MCF 10A (cell line): ENCODE measurements at regions of chr2 and their contacts with region 1.

Region 1: DNA sequence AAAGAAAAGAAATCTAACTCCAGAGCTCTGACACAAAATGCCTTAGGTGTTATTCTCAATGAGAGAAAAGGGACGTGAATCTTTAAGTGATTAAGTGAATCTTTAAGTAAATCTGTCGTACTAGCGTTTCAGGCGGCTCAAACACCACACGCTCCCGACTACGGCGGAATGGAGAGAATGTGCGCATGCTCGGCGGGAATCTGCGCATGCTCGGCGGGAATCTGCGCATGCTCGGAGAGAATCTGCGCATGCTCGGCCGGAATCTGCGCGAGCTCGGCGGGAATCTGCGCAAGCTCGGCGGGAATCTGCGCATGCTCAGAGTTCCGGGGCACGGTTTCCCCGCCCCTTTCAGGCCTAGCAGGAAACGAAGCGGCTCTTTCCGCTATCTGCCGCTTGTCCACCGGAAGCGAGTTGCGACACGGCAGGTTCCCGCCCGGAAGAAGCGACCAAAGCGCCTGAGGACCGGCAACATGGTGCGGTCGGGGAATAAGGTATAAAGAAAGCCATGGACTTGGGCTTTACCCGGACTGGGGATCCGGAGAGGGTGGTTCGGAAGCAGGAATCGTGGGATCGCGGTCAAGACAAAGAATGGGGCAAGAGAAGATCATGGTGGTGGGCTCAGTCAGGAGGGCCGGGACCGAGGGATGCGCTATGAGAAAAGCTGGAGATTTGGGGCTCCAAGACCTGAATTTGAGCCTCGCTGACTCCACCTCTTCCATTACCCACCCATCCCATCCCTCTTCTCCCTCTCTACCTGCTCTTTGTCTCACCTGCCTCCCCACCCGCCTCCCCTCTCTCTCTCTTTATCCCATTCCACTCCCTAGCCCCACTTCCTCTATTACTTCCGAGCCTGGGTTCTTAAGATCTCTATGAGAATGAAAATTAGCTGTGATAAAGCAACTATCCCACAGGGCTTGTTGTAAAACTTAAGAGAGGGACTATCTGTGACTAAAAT is at the start of gene XRCC5:
- DNase-seq: peak; percentile 95
- H3K4me3 Mint-ChIP-seq: peak within 1 kb of the TSS; percentile 100
- H3K27ac Mint-ChIP-seq: peak within 1 kb of the TSS; percentile 100
- H3K4me1 Mint-ChIP-seq: peaks cover 24% of the 10 kb centered on the region
- H3K27me3 Mint-ChIP-seq: no peaks in the 10 kb centered on the region
- CTCF ChIP-seq: no peak
- total RNA-seq, gene XRCC5: 159 and 198 TPM in 2 replicates

Region 2: DNA sequence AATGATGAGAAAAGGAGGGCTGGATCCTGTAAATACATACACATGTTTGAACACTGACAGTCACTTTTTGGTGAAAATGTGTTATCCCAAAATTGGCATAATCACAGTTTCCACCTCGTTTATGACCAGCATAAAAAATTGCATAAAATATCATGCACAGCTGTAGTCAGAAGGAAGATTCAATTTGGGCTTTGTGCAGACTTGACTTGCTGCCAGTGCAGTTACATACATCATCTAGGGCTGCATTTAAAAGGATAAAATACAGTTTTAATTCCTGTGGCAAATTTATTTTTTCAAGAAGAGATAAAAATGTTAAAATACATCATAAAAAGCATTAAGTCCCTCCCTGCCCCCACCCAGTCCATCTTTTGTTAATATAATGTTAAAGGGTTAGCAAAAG is 1594.5 kb before region 1 on chr2:
- CTCF ChIA-PET with region 1: no interaction called
- POLR2A ChIA-PET with region 1: no interaction called
- intact Hi-C with region 1: no loop called
- DNase-seq: no peak
- H3K4me3 Mint-ChIP-seq: no peak overlapping the region
- H3K27ac Mint-ChIP-seq: no peak overlapping the region
- H3K4me1 Mint-ChIP-seq: no peaks in the 10 kb centered on the region
- H3K27me3 Mint-ChIP-seq: no peaks in the 10 kb centered on the region
- CTCF ChIP-seq: no peak

Region 3: DNA sequence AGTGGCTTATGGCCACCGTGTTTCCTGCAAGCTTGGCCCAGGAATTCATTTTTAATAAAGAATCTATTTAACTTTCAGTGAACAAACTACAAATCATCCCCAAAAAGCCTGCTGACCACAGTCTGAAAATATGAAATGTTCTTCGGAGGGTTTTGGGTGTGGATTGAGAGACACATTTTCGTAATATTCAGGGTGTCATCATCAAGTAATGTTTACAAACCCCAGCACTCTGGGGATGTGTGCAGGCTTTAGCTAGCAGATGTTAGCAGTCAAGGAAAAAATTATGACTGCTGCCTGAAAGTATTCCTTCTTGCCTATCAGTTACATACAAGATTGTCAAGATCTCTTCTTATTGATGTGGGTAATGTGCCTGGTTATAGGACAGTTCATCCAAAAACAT is 529.4 kb before region 1 on chr2:
- CTCF ChIA-PET with region 1: no interaction called
- POLR2A ChIA-PET with region 1: no interaction called
- intact Hi-C with region 1: no loop called
- DNase-seq: peak; percentile 76
- H3K4me3 Mint-ChIP-seq: no peak overlapping the region
- H3K27ac Mint-ChIP-seq: peak overlapping the region; percentile 94
- H3K4me1 Mint-ChIP-seq: peaks cover 22% of the 10 kb centered on the region
- H3K27me3 Mint-ChIP-seq: no peaks in the 10 kb centered on the region
- CTCF ChIP-seq: no peak

Region 4: GRCh38 chr2:216081487-216082116 is 27.6 kb before region 1 on chr2 and contains the starts of genes PECR and TMEM169:
- CTCF ChIA-PET with region 1: interaction called, 21 read pairs
- POLR2A ChIA-PET with region 1: interaction called, 37 read pairs
- intact Hi-C with region 1: loop called (anchors 2 kb)
- DNase-seq: peak; percentile 69
- H3K4me3 Mint-ChIP-seq: peak within 1 kb of the TSS; percentile 81
- H3K27ac Mint-ChIP-seq: peak within 1 kb of the TSS; percentile 71
- H3K4me1 Mint-ChIP-seq: peaks cover 8% of the 10 kb centered on the region
- H3K27me3 Mint-ChIP-seq: no peaks in the 10 kb centered on the region
- CTCF ChIP-seq: no peak
- total RNA-seq, gene PECR: 8.3 and 20.0 TPM in 2 replicates
- total RNA-seq, gene TMEM169: 0.25 and 0.35 TPM in 2 replicates

Region 5: DNA sequence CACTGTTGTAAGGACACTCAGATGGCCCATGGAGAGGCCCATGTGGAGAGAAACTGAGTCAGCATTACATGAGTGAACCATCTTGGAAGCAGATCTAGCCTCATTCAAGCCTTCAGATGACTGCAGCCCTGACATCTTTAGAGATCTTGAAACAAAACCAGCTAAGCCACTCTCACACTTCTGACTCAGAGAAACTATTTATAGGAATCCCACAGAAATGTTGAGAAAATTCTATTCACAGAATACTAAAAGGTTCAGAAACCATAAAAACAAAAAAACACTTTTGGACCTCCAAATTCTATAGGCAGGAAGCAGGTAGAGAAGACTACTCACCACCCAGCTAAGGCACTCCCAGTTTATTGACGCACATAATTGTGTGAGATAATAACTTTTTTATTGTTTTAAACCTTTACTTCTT is 18.9 kb before region 1 on chr2:
- CTCF ChIA-PET with region 1: interaction called, 6 read pairs
- POLR2A ChIA-PET with region 1: interaction called, 13 read pairs
- intact Hi-C with region 1: no loop called
- DNase-seq: no peak
- H3K4me3 Mint-ChIP-seq: no peak overlapping the region
- H3K27ac Mint-ChIP-seq: no peak overlapping the region
- H3K4me1 Mint-ChIP-seq: no peaks in the 10 kb centered on the region
- H3K27me3 Mint-ChIP-seq: peaks cover under 1% of the 10 kb centered on the region
- CTCF ChIP-seq: no peak

Region 6: GRCh38 chr2:216245391-216245975 is 136.2 kb after region 1 on chr2:
- CTCF ChIA-PET with region 1: no interaction called
- POLR2A ChIA-PET with region 1: no interaction called
- intact Hi-C with region 1: no loop called
- DNase-seq: no peak
- H3K4me3 Mint-ChIP-seq: no peak overlapping the region
- H3K27ac Mint-ChIP-seq: no peak overlapping the region
- H3K4me1 Mint-ChIP-seq: no peaks in the 10 kb centered on the region
- H3K27me3 Mint-ChIP-seq: no peaks in the 10 kb centered on the region
- CTCF ChIP-seq: no peak

Region 7: DNA sequence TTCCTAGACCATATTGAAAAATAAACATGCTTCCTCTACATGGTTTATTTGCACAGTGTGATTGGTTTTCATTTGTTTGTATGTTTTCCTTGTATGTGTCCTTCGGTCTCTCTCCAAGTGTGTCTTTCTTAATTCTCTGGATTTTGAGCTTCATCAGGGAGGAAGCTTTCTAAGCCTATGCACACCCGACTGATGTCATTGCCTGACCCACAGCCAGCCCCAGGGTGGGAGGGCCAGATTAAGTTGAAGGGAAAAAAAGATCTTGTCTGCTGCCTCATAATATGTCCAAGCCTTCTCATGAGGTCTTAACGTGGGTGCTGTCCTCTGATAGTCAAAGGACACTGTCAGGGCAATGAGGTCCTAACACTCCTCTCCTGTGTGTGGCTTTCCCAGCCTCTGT is 147.8 kb after region 1 on chr2:
- CTCF ChIA-PET with region 1: no interaction called
- POLR2A ChIA-PET with region 1: no interaction called
- intact Hi-C with region 1: no loop called
- DNase-seq: no peak
- H3K4me3 Mint-ChIP-seq: no peak overlapping the region
- H3K27ac Mint-ChIP-seq: no peak overlapping the region
- H3K4me1 Mint-ChIP-seq: no peaks in the 10 kb centered on the region
- H3K27me3 Mint-ChIP-seq: no peaks in the 10 kb centered on the region
- CTCF ChIP-seq: no peak